AG04450 (cell line): ENCODE measurements at regions of chr3 and their contacts with region 1.

Region 1: GRCh38 chr3:156554842-156555687 is at the start of gene SSR3:
- DNase-seq: peak; percentile 99
- H3K4me3 ChIP-seq: peak within 1 kb of the TSS; percentile 90
- H3K27ac ChIP-seq: peak within 1 kb of the TSS; percentile 92
- H3K27me3 ChIP-seq: no peaks in the 10 kb centered on the region
- CTCF ChIP-seq: peak; percentile 23; the same call in 1 of the 2 replicates
- polyA plus RNA-seq, gene SSR3: 293 and 328 TPM in 2 replicates

Region 2: GRCh38 chr3:156409694-156410093 is 145.4 kb before region 1 on chr3:
- CTCF ChIA-PET with region 1: no interaction called
- POLR2A ChIA-PET with region 1: no interaction called
- DNase-seq: no peak
- H3K4me3 ChIP-seq: no peak overlapping the region
- H3K27ac ChIP-seq: no peak overlapping the region
- H3K27me3 ChIP-seq: peaks cover 5% of the 10 kb centered on the region
- CTCF ChIP-seq: no peak

Region 3: DNA sequence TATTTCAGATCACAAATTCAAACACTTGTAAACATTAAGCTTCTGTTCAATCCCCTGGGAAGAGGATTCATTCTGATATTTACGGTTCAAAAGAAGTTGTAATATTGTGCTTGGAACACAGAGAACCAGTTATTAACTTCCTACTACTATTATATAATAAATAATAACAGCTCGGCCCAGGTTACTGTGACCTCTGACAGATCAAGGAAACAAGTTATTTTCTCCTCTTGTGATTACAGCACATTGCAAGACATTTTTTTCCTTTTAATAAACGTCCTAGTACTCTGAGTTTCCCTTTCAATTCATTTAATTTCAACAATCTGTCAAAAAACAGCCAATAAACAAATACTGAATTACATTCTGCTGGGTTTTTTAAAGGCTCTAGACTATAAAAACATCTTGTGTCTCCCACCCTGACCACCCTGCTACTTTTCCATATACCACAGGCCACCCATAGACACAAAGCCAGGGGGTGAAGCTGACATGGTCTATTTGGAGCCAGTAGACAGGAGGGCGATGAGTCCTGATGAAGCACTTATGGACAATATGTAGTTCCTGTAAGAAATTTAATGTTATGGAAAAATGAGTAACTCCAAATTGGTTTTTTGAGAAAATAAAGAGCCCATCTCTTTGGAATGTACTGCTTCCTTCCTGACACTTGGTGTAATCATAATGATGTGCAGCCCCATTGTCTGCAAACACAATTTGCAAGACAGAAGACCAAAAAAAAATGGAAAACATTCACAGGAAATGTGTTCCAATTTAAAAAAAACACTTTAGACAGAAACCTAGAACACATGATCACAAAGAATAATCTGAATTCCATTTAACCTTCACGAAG is 12.1 kb before region 1 on chr3:
- CTCF ChIA-PET with region 1: interaction called, 42 read pairs
- POLR2A ChIA-PET with region 1: interaction called, 4 read pairs
- DNase-seq: no peak
- H3K4me3 ChIP-seq: no peak overlapping the region
- H3K27ac ChIP-seq: no peak overlapping the region
- H3K27me3 ChIP-seq: no peaks in the 10 kb centered on the region
- CTCF ChIP-seq: no peak

Region 4: DNA sequence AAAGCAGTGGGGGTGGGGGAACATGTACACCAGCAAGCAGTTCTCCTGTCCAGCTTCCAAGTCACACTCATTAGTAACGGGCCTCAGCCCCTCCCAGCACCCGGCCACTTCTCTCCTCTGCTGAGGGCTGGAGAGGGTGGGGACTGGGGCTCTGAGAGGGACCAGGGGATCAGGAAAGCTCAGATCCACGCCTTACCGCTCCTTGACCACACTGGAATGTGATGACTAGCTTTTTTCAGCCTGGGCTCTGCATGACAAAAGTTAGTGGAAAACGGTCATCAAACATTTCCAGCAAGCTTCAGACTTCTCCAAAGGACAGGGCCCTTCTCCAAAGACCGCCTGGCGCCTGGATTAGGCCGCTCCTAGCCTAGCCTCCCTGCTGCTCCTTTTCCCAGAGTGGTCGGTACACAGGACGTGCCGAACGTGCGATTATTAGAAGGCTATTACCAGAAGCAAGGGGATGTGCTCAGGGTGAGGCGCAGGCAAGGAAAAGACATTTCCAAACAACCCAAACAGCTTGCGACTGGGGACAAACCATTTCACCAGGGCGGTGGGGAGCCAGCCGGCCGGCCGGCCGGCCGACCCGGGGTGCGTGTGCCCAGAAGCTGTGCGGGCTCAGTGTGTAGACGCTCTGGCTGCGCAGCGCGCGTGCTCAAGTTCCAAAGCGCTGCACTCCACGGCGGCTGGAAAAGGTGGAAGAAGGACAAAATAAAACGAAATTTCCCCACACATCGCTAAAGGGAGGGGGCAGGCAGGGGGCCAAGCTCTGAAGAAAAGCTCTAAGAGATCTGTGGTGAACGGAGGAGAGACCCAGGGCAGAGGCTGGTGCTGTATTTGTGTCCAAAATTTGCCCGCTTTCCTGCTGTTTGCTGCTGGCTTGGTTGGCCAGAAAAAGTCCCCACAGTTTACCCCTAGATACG is 50.9 kb after region 1 on chr3:
- CTCF ChIA-PET with region 1: no interaction called
- POLR2A ChIA-PET with region 1: interaction called, 10 read pairs
- DNase-seq: no peak
- H3K4me3 ChIP-seq: peak overlapping the region; percentile 52
- H3K27ac ChIP-seq: peak overlapping the region; percentile 75
- H3K27me3 ChIP-seq: no peaks in the 10 kb centered on the region
- CTCF ChIP-seq: no peak

Region 5: DNA sequence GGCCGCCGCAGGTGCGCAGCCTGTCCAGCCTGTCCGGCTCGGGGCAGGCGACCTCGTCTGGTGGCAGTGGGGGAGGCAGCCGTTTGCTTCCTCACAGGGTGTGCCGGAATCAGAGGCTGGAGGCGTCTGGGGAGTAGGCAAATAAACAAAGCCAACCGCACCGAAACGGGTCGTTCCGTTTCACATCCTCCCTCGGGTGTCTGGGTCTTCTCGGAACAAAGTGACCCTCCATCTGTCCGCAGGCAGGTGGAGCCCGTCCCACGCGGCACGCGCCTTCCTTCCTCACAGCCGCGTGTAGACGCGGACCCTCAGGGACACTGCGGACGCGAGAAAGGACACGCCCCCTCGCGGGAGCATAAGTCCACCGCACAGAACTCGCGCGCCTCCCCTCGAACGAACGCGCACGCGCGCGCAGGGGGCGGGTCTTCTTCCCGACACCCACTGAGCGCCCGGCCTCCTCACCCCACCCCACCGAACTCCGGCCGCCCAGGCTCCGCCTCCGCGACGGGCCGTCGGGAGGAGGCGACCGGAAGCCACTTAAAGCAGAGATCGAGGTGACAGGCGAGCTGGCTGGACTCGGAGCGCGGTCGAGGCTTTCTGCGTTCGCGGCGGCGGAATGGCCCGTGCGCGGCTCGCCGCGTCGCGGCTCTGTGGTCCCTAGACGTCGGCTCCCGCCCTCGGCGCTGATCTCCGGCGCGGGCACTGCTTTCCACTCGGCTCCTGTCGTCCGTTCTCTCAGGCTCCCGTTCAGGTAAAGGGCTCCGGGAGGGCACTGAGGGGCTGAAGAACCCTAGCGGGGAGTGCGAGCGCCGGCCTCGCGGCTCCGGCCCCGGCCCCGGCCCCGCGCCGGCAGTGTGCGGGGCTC is 119.2 kb after region 1 on chr3 and contains the start of gene TIPARP:
- CTCF ChIA-PET with region 1: interaction called, 10 read pairs
- POLR2A ChIA-PET with region 1: interaction called, 23 read pairs
- DNase-seq: peak; percentile 93
- H3K4me3 ChIP-seq: peak within 1 kb of the TSS; percentile 82
- H3K27ac ChIP-seq: peak within 1 kb of the TSS; percentile 77
- H3K27me3 ChIP-seq: no peaks in the 10 kb centered on the region
- CTCF ChIP-seq: peak; percentile 60
- polyA plus RNA-seq, gene TIPARP: 17.8 and 25.1 TPM in 2 replicates

Region 6: DNA sequence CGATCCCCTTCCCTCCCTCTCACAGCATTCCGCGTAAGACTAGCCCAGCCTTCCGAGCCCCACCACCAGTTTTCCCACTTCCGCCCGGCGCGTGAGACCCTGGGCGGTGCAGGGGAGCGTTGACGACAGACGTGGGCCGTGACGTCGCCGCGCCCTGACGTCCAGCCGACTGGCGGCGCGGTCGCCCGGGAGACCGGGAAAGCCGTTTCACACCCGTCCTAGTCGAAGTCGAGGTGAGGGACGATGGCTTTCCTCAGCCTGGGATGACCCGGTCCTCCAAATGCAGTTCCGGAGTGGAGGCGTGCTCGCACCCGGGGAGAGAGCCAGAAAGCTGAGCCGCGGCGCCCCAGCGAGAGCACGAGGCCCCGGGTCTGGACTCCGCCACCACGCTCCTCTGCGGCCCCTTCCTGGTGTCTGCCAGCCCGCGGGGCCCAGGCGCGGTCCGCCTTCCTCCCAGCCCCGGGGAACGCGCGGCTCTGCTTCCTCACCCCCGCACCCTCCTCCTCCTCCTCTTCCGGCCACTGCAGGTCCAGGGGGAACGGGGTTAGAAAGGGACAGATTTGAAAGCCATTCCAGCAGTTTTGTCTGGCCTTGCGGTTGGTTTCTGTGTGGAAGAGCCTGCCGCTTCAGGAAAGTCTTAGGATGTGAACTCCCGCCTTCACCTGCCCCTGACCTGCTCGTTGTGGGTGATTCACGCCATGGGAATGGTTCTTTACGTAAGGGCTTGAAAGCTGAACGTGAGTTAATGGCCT is 271.3 kb after region 1 on chr3 and contains the start of gene LEKR1:
- CTCF ChIA-PET with region 1: no interaction called
- POLR2A ChIA-PET with region 1: no interaction called
- DNase-seq: no peak
- H3K4me3 ChIP-seq: peak within 1 kb of the TSS; percentile 72
- H3K27ac ChIP-seq: peak within 1 kb of the TSS; percentile 93
- H3K27me3 ChIP-seq: no peaks in the 10 kb centered on the region
- CTCF ChIP-seq: no peak
- polyA plus RNA-seq, gene LEKR1: 0.17 and 0.26 TPM in 2 replicates

Region 7: DNA sequence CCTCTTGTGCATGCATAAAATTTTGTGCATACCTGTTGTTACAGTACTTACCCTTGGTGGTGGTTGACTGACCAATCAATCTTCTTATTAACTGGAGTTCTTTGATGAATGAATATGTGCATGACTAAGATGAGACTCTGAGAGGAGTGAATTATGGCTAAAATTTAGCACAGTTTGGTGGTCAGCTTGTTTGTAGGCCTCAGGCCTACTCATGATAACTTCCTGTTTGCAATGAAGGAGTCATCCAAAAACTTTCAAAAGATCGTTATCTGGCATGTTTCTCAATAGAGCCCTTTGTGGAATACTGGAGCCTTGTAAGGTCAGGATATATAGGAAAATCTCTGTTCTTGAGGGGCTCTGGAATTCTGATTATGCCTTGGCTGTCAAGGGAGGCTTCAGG is 337.6 kb after region 1 on chr3:
- CTCF ChIA-PET with region 1: no interaction called
- POLR2A ChIA-PET with region 1: no interaction called
- DNase-seq: no peak
- H3K4me3 ChIP-seq: no peak overlapping the region
- H3K27ac ChIP-seq: no peak overlapping the region
- H3K27me3 ChIP-seq: no peaks in the 10 kb centered on the region
- CTCF ChIP-seq: no peak

Region 8: GRCh38 chr3:157088601-157089454 is 533.8 kb after region 1 on chr3:
- CTCF ChIA-PET with region 1: interaction called, 3 read pairs
- POLR2A ChIA-PET with region 1: interaction called, 26 read pairs
- DNase-seq: peak; percentile 88
- H3K4me3 ChIP-seq: peak overlapping the region; percentile 72
- H3K27ac ChIP-seq: peak overlapping the region; percentile 99
- H3K27me3 ChIP-seq: no peaks in the 10 kb centered on the region
- CTCF ChIP-seq: no peak

Region 9: DNA sequence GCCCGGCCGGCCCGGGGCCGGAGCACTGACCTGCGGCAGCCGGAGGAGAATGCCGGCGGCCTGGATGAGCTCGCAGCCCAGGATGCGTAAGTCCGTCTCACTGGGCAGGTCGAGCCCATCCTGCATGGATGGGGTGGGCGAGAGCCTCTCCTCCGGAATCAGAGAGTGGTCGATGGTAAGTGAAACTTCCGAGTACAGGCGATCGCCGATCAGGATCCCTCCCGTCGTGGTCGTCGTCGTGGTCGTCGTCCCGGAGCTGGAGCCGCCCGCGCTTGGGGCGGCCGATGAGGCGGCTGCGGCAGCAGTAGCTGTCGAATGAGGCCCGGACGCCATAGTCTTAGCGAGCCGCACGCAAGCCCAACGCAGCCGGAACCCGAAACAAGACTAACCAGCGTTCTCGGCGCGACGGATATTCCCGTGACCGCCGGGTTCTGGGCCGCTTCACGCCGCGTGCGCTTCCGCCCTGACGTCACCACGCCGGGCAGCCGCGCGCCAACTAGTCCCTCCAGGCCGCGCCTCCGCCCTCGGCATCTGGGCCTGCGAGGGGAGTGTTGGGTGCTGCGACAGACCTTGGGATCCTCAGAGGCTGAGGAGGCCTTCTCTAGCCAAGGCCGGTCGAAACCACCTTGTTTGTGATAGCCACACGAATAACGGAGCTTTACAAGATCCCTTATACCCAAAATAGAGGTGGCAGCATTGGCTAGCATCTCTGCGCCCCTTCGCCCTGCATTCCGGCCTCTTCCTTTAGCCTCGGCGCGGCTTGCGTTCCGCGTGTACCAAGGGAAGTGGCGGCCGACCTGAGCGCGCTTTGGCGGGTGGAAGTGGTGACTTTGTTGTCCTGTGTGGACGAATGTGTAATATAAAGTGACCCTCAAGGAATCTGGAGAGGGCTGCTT is 604.9 kb after region 1 on chr3 and contains the start of gene CCNL1:
- CTCF ChIA-PET with region 1: no interaction called
- POLR2A ChIA-PET with region 1: interaction called, 12 read pairs
- DNase-seq: peak; percentile 96
- H3K4me3 ChIP-seq: peak within 1 kb of the TSS; percentile 94
- H3K27ac ChIP-seq: peak within 1 kb of the TSS; percentile 100
- H3K27me3 ChIP-seq: no peaks in the 10 kb centered on the region
- CTCF ChIP-seq: no peak
- polyA plus RNA-seq, gene CCNL1: 113 and 145 TPM in 2 replicates